Gastrocnemius medialis (tissue), 4 donors: ENCODE measurements at regions of chr20 and their contacts with region 1.

Region 1: DNA sequence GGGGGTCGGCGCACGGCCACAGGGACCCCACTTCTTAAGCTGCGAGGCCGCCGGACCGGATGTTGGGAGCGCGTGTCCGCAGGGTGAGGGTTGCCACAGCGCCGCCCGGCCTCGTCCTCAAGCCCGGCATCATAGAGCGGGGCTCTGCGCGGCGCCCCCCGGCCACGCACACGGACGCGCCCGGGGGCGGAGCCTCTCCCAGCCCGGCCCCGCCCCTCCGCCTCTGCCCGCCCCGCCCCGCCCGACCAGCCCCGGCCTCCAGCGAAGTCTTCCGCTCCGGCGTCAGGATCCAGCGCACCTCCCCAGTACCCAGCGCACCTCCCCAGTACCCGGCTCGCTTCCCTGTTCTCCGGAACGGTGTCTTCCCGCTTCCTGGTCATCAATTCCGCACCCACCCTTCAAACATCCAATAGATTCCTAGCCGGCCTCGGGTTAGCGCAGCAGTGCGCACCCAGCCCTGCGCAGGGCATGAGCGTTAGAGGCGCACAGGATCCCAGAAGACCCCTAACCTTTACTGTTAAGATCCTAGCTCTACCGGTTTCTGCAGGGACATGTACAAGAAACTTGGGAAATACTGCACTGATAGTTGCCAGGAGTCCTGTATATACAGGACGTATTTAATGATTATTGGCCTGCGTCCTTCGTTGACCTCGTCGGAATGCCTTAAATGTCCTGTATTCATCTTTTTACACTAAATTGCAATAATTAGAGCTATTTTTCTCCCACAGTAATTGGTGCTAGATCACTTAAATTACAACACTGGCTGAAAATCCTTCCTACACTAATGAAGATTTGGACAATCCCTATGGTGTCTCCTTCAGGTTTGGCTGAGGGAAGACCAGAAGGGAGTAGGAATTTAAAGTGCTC is 535 bp upstream of the DNAAF9 start:
- DNase-seq: peak; percentile 28 to 54
- ATAC-seq: peak; percentile 67 to 74
- H3K4me3 ChIP-seq: peak overlapping the region; percentile 68 to 86 (median 78)
- H3K27ac ChIP-seq: peak overlapping the region; percentile 81 to 89 (median 83)
- H3K4me1 ChIP-seq: peaks cover 4 to 11% of the 10 kb centered on the region in 2 donors
- H3K27me3 ChIP-seq: no peaks in the 10 kb centered on the region
- CTCF ChIP-seq: no peak
- POLR2A ChIP-seq: peak; percentile 32 to 44

Region 2: DNA sequence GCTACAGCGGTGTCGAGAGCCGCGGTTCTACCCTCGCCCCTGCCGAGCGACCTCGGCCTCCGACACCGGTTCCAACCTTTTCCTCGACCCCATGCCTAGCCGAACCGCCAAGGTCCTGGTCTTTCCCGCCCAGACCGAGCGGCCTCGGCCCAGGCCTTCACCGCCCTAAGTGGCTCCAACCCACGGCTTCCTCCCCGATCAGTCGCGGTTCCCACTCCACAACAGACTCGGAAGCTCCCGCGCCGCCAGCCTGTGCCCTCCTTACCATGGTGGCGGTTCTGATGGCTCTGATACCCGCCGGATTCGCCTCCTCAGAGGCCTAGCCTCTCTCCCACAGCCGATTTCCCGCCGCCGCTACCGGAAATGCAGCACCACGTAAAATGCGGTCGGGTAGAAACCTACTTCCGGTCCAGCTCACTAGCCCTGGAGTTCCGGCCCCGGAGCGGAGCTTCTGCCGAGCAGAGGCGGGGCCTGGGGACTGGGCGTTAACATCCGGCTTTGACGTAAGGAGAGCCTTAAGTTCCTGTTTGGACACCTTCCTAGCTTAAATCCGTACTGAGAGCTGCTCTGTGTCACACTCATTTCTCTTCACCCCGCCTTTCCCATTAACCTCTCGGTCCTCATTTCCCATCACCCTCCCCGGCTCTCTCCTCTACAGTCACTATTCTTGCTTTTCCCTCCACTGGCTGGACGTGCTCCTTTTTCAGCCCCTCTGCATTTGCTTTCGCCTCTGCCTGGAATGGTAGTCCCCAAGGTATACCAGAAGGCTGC is 937.4 kb before region 1 on chr20 and contains the start of gene SNRPB:
- in situ Hi-C with region 1: no loop called
- intact Hi-C with region 1: loop called (anchors 5 kb)
- DNase-seq: peak; percentile 96 to 97
- ATAC-seq: peak; percentile 98 to 99
- H3K4me3 ChIP-seq: peak within 1 kb of the TSS; percentile 77 to 95 (median 84)
- H3K27ac ChIP-seq: peak within 1 kb of the TSS; percentile 86 to 95 (median 88)
- H3K4me1 ChIP-seq: peaks cover 12 to 15% of the 10 kb centered on the region in 2 donors
- H3K27me3 ChIP-seq: no peaks in the 10 kb centered on the region
- CTCF ChIP-seq: no peak
- POLR2A ChIP-seq: peak; percentile 86 to 96
- total RNA-seq, gene SNRPB: 131 to 209 (median 190) TPM

Region 3: DNA sequence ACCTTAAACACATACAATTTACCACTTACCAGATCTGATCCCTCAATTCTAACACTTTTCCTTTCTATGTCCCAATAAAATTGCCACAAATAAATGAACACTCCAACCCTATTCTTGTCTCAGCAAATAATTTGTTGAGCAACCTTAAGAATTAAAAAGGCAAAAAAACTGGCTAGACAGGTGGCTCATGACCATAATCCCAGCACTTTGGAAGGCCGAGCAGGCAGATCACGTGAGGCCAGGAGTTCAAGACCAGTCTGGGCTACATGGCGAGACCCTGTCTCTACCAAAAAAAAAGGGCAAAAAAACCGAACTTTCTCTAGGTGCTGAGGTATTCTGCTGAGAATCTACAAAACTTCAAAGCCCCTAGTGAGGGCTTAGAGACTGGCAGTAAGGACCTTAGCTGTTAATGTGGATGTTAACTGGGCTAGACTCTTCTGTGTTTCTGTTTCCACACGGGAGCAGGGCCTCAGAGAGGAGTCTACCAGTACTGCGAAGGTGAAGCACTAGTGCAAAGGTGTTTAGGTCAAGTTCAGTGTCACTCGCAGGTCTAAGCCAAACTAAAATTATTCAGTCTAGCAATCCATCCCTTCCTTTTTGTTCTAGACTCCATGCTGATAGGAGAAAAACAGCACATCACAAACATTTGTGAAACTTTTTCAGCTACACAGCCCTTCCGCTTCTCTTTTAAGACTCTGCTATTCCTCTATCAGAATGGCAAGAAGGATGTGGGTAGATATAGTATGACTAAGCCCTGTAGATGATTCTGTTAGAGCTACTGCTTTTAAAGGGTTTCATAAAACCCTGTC is 251.0 kb before region 1 on chr20:
- in situ Hi-C with region 1: no loop called
- intact Hi-C with region 1: loop called (anchors 10 kb)
- DNase-seq: no peak
- ATAC-seq: no peak
- H3K4me3 ChIP-seq: peak overlapping the region; percentile 8 to 98 (median 90)
- H3K27ac ChIP-seq: peak overlapping the region; percentile 63 to 96 (median 92)
- H3K4me1 ChIP-seq: peaks cover 61 to 62% of the 10 kb centered on the region in 2 donors
- H3K27me3 ChIP-seq: no peaks in the 10 kb centered on the region
- CTCF ChIP-seq: no peak
- POLR2A ChIP-seq: no peak

Region 4: GRCh38 chr20:3470627-3471396 is 62.8 kb after region 1 on chr20 and contains the start of gene ATRN:
- in situ Hi-C with region 1: no loop called
- intact Hi-C with region 1: loop called (anchors 1 kb)
- DNase-seq: peak; percentile 69 to 84
- ATAC-seq: peak; percentile 93
- H3K4me3 ChIP-seq: peak within 1 kb of the TSS; percentile 72 to 91 (median 84)
- H3K27ac ChIP-seq: peak within 1 kb of the TSS; percentile 79 to 87 (median 80)
- H3K4me1 ChIP-seq: peaks cover 26 to 29% of the 10 kb centered on the region in 2 donors
- H3K27me3 ChIP-seq: no peaks in the 10 kb centered on the region
- CTCF ChIP-seq: peak in 1 of 5 experiments; percentile 5
- POLR2A ChIP-seq: peak; percentile 62
- total RNA-seq, gene ATRN: 14.4 to 20.0 (median 16.3) TPM